Panc1 (cell line): ENCODE measurements at regions of chr14 and their contacts with region 1.

Region 1: GRCh38 chr14:103281496-103282231 is 52.4 kb upstream of the EIF5 start:
- DNase-seq: no peak
- ATAC-seq: peak; percentile 76
- H3K4me3 ChIP-seq: no peak overlapping the region
- H3K27ac ChIP-seq: no peak overlapping the region
- H3K4me1 ChIP-seq: no peaks in the 10 kb centered on the region
- H3K27me3 ChIP-seq: no peaks in the 10 kb centered on the region
- CTCF ChIP-seq: peak; percentile 64

Region 2: DNA sequence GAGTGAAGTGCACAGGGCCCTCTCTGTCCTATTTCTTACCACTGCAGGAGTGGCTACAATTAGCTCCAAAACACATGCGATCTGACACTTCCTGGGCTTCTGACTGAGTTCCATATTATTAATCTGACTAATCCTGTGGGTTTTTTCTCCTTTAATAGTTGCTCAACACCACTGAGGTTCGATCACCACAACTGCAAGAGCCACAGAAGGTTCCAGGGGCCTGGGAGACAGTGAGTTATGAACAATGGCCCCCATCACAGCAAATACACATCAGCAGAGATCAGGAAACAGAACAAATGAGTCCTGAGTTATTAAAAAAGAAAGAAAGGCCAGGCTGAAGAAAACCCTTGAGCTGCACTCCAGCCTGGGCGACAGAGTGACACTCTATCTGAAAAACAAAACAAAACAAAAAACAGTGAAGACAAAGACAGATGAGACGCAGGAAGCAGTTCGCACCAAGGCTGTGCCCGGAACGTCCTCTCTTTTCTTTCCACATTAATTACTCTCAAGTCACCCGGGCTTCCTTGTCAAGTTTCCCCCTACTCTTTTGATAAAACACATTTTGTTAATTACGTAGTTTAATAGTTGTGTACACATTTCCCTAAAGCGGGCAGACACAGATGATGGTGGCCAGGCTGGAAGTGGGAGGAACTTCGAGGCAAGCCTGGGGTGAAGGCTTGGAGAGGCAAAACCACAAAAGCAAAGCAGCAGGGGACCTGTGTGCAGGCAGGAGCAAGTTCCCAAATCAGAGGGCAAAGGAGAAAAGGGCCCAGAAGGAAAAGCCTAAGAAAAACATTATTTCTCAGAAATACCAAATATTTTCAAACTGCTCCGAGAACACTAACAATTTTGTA is 267.0 kb before region 1 on chr14:
- CTCF ChIA-PET with region 1: no interaction called
- POLR2A ChIA-PET with region 1: no interaction called
- in situ Hi-C with region 1: no loop called
- intact Hi-C with region 1: no loop called
- DNase-seq: no peak
- ATAC-seq: no peak
- H3K4me3 ChIP-seq: no peak overlapping the region
- H3K27ac ChIP-seq: peak overlapping the region; percentile 66; the same call in 1 of the 2 replicates
- H3K4me1 ChIP-seq: peaks cover 42% of the 10 kb centered on the region
- H3K27me3 ChIP-seq: no peaks in the 10 kb centered on the region
- CTCF ChIP-seq: no peak

Region 3: GRCh38 chr14:103141119-103141796 is 140.4 kb before region 1 on chr14:
- CTCF ChIA-PET with region 1: interaction called, 4 read pairs
- POLR2A ChIA-PET with region 1: no interaction called
- in situ Hi-C with region 1: no loop called
- intact Hi-C with region 1: loop called (anchors 5 kb)
- DNase-seq: peak; percentile 54
- ATAC-seq: no peak
- H3K4me3 ChIP-seq: no peak overlapping the region
- H3K27ac ChIP-seq: peak overlapping the region; percentile 75
- H3K4me1 ChIP-seq: peaks cover 58% of the 10 kb centered on the region
- H3K27me3 ChIP-seq: no peaks in the 10 kb centered on the region
- CTCF ChIP-seq: peak; percentile 86

Region 4: DNA sequence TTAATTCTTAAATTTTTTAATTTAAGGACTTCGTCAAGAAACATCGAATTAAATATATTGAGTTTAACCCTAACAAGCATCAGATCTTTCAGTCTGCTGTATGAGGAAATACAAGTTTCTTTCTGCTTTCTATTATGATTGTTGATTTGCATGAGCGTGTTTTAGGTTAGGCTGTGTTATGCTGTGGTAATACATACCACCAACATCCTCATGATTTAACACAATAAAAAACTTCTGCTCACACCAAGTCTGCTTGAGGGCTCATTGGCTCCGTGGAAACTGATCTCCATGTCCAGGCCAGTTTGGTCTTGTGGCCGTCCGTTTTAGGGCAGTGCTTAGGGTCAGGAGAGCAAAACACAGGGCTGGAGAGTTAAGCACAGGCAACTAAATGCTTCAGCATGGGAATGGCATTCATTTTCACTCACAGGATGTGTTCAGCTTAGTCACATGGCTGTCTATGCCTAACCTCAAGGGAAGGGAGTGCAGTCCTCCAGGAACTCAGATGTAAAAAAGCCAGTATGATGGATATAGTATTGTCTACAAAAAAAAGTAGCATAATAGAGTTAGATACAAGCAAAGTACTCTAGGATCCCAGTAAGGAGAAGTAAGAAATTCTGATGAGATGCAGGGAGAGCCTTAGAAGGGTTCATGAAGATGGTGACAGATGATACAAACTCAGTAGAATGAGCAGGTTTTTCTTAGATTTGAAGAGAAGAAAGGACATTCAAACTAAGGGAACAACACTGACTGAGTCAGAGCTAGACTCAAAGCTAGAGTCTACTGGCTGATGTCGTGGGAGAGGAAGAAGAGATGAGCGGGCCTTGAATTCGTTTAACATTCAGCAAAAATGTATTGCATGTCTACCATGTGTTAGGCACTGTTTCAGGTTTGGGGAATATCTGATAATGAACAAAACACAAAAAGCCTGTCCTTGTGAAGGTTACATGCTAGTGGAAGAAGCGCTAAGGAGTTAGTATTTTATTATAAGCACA is 119.9 kb after region 1 on chr14:
- CTCF ChIA-PET with region 1: no interaction called
- POLR2A ChIA-PET with region 1: no interaction called
- in situ Hi-C with region 1: no loop called
- intact Hi-C with region 1: no loop called
- DNase-seq: no peak
- ATAC-seq: 0 out of 2 replicates have a peak, but pooled peaks have one; percentile 42
- H3K4me3 ChIP-seq: no peak overlapping the region
- H3K27ac ChIP-seq: no peak overlapping the region; the same call in 1 of the 2 replicates
- H3K4me1 ChIP-seq: peaks cover 25% of the 10 kb centered on the region
- H3K27me3 ChIP-seq: no peaks in the 10 kb centered on the region
- CTCF ChIP-seq: no peak